ENCODE measurements at regions of chr11 and their contacts with region 1.

Region 1: DNA sequence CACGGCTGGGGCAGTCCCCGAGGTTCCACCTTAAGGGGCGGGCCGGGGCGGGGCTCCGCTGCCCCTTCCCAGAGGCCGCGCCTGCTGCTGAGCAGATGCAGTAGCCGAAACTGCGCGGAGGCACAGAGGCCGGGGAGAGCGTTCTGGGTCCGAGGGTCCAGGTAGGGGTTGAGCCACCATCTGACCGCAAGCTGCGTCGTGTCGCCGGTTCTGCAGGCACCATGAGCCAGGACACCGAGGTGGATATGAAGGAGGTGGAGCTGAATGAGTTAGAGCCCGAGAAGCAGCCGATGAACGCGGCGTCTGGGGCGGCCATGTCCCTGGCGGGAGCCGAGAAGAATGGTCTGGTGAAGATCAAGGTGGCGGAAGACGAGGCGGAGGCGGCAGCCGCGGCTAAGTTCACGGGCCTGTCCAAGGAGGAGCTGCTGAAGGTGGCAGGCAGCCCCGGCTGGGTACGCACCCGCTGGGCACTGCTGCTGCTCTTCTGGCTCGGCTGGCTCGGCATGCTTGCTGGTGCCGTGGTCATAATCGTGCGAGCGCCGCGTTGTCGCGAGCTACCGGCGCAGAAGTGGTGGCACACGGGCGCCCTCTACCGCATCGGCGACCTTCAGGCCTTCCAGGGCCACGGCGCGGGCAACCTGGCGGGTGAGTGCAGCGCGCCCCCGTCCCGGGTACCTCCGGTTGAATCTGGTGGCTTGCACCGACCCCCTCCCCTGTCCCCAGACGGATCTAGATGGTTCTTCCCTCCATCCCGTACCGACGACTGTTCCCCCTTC is at the start of gene SLC3A2:
- DNase-seq: peak; percentile 85 to 89 (median 88)
- H3K4me3 ChIP-seq: peak within 1 kb of the TSS; percentile 96 to 98
- H3K4me3 Mint-ChIP-seq: peak within 1 kb of the TSS; percentile 93 to 100 (median 100)
- H3K27ac ChIP-seq: peak within 1 kb of the TSS; percentile 93
- H3K27ac Mint-ChIP-seq: peak within 1 kb of the TSS; percentile 93 to 100 (median 99)
- H3K4me1 ChIP-seq: peaks cover 52% of the 10 kb centered on the region
- H3K4me1 Mint-ChIP-seq: peaks cover 26 to 60% (median 41%) of the 10 kb centered on the region in 4 donors
- H3K27me3 ChIP-seq: no peaks in the 10 kb centered on the region
- H3K27me3 Mint-ChIP-seq: no peaks in the 10 kb centered on the region
- total RNA-seq, gene SLC3A2: 205 to 215 TPM

Region 2: GRCh38 chr11:62394825-62395538 is 486.0 kb before region 1 on chr11:
- CTCF ChIA-PET with region 1: no interaction called
- POLR2A ChIA-PET with region 1: no interaction called
- intact Hi-C with region 1: loop called (anchors 10 kb)
- DNase-seq: peak; percentile 56 to 63 (median 59)
- H3K4me3 ChIP-seq: no peak overlapping the region
- H3K4me3 Mint-ChIP-seq: no peak overlapping the region
- H3K27ac ChIP-seq: no peak overlapping the region
- H3K27ac Mint-ChIP-seq: peak overlapping the region in 4 of 7 donors; percentile 58 to 68 (median 60)
- H3K4me1 ChIP-seq: peaks cover 24% of the 10 kb centered on the region
- H3K4me1 Mint-ChIP-seq: peaks cover 8 to 12% (median 10%) of the 10 kb centered on the region in 4 donors
- H3K27me3 ChIP-seq: no peaks in the 10 kb centered on the region
- H3K27me3 Mint-ChIP-seq: no peaks in the 10 kb centered on the region

Region 3: DNA sequence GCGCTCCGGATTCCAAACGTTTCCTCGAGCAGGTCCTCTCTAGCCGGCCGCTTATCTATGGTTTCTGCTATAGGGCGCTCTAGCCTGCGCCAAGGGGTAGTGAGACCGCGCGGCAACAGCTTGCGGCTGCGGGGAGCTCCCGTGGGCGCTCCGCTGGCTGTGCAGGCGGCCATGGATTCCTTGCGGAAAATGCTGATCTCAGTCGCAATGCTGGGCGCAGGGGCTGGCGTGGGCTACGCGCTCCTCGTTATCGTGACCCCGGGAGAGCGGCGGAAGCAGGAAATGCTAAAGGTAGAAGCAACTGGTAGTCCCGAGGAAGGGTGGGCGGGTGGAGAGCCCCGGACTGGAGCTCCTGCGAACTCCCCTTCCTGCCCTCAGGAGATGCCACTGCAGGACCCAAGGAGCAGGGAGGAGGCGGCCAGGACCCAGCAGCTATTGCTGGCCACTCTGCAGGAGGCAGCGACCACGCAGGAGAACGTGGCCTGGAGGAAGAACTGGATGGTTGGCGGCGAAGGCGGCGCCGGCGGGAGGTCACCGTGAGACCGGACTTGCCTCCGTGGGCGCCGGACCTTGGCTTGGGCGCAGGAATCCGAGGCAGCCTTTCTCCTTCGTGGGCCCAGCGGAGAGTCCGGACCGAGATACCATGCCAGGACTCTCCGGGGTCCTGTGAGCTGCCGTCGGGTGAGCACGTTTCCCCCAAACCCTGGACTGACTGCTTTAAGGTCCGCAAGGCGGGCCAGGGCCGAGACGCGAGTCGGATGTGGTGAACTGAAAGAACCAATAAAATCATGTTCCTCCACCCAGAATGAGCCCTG is 209.2 kb before region 1 on chr11 and contains the starts of genes LBHD1 and UQCC3:
- CTCF ChIA-PET with region 1: interaction called, 4 read pairs
- POLR2A ChIA-PET with region 1: interaction called, 11 read pairs
- intact Hi-C with region 1: no loop called
- DNase-seq: peak; percentile 68 to 80 (median 75)
- H3K4me3 ChIP-seq: peak within 1 kb of the TSS; percentile 91 to 97
- H3K4me3 Mint-ChIP-seq: peak within 1 kb of the TSS; percentile 93 to 99 (median 99)
- H3K27ac ChIP-seq: peak within 1 kb of the TSS; percentile 74
- H3K27ac Mint-ChIP-seq: peak within 1 kb of the TSS; percentile 89 to 98 (median 97)
- H3K4me1 ChIP-seq: peaks cover 55% of the 10 kb centered on the region
- H3K4me1 Mint-ChIP-seq: peaks cover 14 to 74% (median 43%) of the 10 kb centered on the region in 4 donors
- H3K27me3 ChIP-seq: no peaks in the 10 kb centered on the region
- H3K27me3 Mint-ChIP-seq: no peaks in the 10 kb centered on the region
- total RNA-seq, gene LBHD1: 26.7 to 28.6 TPM
- total RNA-seq, gene UQCC3: 7.2 to 8.5 TPM

Region 4: DNA sequence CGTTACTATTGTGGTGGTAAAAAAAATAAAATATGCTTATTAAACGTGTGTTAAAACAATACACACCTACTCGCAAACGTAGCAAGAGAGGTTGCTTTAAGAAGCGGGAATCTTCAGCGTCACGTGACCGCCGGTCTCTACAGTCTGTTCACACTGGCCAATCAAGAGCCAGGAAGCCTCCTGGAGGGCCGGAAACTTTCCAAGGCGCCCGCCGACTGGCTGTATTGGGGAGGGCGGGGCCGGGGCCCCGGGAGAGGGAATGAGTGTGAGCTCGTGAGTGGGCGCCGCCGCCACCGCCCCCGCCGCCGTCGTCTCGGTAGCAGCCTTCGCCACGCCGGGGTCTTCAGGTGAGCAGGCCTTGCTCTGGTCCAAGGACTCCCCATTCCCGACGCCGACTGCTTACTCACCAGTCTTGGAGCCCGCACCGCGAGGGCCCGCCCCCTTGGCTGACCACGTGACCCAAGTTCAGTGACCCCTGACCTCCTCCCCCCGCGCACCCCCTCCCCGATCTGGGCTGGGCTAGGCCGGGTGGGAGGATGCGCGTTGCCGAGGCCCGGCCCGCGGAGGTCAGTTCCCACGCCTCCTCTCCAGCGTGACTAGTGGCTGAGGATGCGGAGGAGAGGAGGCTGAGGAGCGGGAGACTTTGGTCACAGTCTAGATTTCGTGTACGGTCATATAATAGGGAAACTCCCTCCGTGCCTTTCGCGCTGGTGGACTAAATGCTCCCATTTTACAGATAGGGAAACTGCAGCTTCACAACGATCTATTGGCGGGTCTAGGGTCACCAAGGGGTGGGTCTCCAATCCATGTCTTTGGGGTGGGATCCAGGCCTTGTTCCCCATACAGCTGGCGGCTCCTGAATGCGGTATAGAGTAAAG is 109.6 kb before region 1 on chr11 and contains the start of gene TAF6L:
- CTCF ChIA-PET with region 1: interaction called, 5 read pairs
- POLR2A ChIA-PET with region 1: interaction called, 12 read pairs
- intact Hi-C with region 1: no loop called
- DNase-seq: peak; percentile 86 to 92 (median 88)
- H3K4me3 ChIP-seq: peak within 1 kb of the TSS; percentile 67 to 83
- H3K4me3 Mint-ChIP-seq: peak within 1 kb of the TSS; percentile 87 to 97 (median 92)
- H3K27ac ChIP-seq: peak within 1 kb of the TSS; percentile 82
- H3K27ac Mint-ChIP-seq: peak within 1 kb of the TSS; percentile 92 to 99 (median 97)
- H3K4me1 ChIP-seq: peaks cover 24% of the 10 kb centered on the region
- H3K4me1 Mint-ChIP-seq: peaks cover 14 to 32% (median 22%) of the 10 kb centered on the region in 4 donors
- H3K27me3 ChIP-seq: no peaks in the 10 kb centered on the region
- H3K27me3 Mint-ChIP-seq: no peaks in the 10 kb centered on the region
- total RNA-seq, gene TAF6L: 26.3 to 34.0 TPM

Region 5: DNA sequence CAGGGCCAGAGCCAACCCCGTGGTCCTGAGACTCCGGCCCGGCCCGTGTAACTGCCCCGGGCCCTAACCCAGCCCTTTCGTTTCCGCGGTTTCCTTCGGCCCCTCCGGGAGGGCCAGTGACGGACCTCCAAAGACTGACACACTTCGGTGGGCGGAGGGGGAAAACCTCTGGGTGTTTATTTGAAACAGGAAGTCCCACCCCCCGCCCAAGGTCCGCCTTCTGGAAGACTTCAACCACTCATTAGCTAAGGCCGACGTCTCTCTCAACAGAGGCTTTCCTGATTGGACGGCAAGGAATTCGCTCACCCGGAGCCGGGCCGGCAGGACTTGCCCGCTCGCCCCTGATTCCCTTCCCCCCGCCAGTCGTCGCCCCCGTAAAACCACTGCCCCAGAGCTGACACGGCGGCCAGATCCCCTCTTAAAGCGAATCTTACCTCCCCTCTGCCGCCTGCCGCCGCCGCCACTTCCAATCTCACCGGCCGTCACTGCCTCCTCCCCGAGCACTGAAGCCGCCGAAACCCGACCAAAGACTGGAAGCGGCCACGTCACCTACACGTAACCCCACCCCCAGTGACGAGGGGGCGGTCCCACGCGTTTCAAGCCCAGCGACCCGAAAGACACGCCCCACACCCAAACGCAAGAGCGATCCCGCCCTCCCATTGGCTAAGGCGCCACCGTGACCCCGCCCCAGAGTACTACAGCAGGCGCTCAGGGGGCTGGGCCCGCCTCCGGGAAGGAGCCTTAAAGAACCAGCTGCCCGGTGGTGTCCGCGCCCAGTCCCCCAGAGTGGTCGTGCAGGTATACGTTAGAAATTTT is 49.3 kb before region 1 on chr11 and contains the start of gene STX5:
- CTCF ChIA-PET with region 1: no interaction called
- POLR2A ChIA-PET with region 1: interaction called, 30 read pairs
- intact Hi-C with region 1: loop called (anchors 1 kb)
- DNase-seq: peak; percentile 99 to 100 (median 100)
- H3K4me3 ChIP-seq: peak within 1 kb of the TSS; percentile 82 to 85
- H3K4me3 Mint-ChIP-seq: peak within 1 kb of the TSS; percentile 94 to 100 (median 98)
- H3K27ac ChIP-seq: peak within 1 kb of the TSS; percentile 97
- H3K27ac Mint-ChIP-seq: peak within 1 kb of the TSS; percentile 94 to 100 (median 99)
- H3K4me1 ChIP-seq: peaks cover 30% of the 10 kb centered on the region
- H3K4me1 Mint-ChIP-seq: peaks cover 21 to 59% (median 41%) of the 10 kb centered on the region in 4 donors
- H3K27me3 ChIP-seq: no peaks in the 10 kb centered on the region
- H3K27me3 Mint-ChIP-seq: no peaks in the 10 kb centered on the region
- total RNA-seq, gene STX5: 66.0 to 67.9 TPM

Region 6: GRCh38 chr11:62905927-62906531 is 25.0 kb after region 1 on chr11:
- CTCF ChIA-PET with region 1: interaction called, 17 read pairs
- POLR2A ChIA-PET with region 1: interaction called, 6 read pairs
- intact Hi-C with region 1: no loop called
- DNase-seq: peak; percentile 66 to 73 (median 71)
- H3K4me3 ChIP-seq: no peak overlapping the region
- H3K4me3 Mint-ChIP-seq: no peak overlapping the region
- H3K27ac ChIP-seq: no peak overlapping the region
- H3K27ac Mint-ChIP-seq: peak overlapping the region in 1 of 7 donors; percentile 53
- H3K4me1 ChIP-seq: no peaks in the 10 kb centered on the region
- H3K4me1 Mint-ChIP-seq: peaks cover 0 to 4% (median 2%) of the 10 kb centered on the region in 4 donors
- H3K27me3 ChIP-seq: no peaks in the 10 kb centered on the region
- H3K27me3 Mint-ChIP-seq: peaks cover 7 to 17% of the 10 kb centered on the region in 2 donors